ENCODE measurements at regions of chr7 and their contacts with region 1.

Region 1: GRCh38 chr7:129644634-129645230 is 33.2 kb downstream of the NRF1 start:
- DNase-seq: peak; percentile 35
- H3K4me3 ChIP-seq: no peak overlapping the region
- H3K27ac ChIP-seq: no peak overlapping the region
- H3K4me1 ChIP-seq: peaks cover 2% of the 10 kb centered on the region
- H3K27me3 ChIP-seq: no peaks in the 10 kb centered on the region
- CTCF ChIP-seq: peak; percentile 35 to 54

Region 2: DNA sequence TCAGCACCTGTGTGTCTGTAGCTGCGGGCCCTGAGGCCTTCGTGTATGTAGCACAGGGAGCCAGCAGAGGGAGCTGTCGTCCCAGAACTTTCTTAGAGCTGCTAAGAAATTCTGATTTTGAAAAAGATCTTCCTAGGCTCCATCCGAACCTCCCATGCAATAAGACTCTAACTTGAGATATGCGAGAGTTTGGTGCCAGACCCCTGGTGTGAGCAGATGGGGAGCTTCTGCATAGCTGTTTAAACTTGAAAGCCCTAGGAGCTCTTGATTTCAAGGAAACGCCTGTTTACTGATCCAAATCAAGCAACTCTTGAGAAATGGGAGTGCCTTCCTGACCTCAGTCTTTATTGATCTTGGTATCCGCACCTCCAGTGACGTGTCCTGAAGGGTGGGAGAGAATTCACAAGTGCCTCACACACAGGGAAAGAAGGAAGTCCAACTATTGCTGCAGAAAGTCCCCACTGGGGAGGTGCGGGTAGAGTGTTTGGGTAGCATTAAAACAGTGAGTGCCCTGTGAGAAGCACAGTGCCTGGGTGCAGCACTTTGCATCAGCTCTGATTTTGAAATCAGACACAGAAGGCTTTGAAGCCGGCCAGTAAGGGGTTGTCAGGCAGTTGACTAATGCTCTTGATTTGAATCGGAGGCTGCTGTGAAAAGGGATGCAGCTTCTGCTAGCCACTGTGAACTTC is 276.9 kb before region 1 on chr7:
- CTCF ChIA-PET with region 1: no interaction called
- dilution Hi-C with region 1: no loop called
- in situ Hi-C with region 1: loop called (anchors 25 kb)
- intact Hi-C with region 1: loop called (anchors 2 kb)
- DNase-seq: peak; percentile 42
- H3K4me3 ChIP-seq: no peak overlapping the region
- H3K27ac ChIP-seq: no peak overlapping the region
- H3K4me1 ChIP-seq: no peaks in the 10 kb centered on the region
- H3K27me3 ChIP-seq: no peaks in the 10 kb centered on the region
- CTCF ChIP-seq: peak; percentile 82 to 89

Region 3: GRCh38 chr7:129543816-129544215 is 100.9 kb before region 1 on chr7:
- CTCF ChIA-PET with region 1: no interaction called
- dilution Hi-C with region 1: no loop called
- in situ Hi-C with region 1: no loop called
- intact Hi-C with region 1: no loop called
- DNase-seq: no peak
- H3K4me3 ChIP-seq: no peak overlapping the region
- H3K27ac ChIP-seq: no peak overlapping the region
- H3K4me1 ChIP-seq: no peaks in the 10 kb centered on the region
- H3K27me3 ChIP-seq: no peaks in the 10 kb centered on the region
- CTCF ChIP-seq: no peak

Region 4: GRCh38 chr7:129634361-129635034 is 10.2 kb before region 1 on chr7:
- CTCF ChIA-PET with region 1: no interaction called
- dilution Hi-C with region 1: no loop called
- in situ Hi-C with region 1: no loop called
- intact Hi-C with region 1: no loop called
- DNase-seq: no peak
- H3K4me3 ChIP-seq: no peak overlapping the region
- H3K27ac ChIP-seq: no peak overlapping the region
- H3K4me1 ChIP-seq: no peaks in the 10 kb centered on the region
- H3K27me3 ChIP-seq: no peaks in the 10 kb centered on the region
- CTCF ChIP-seq: no peak

Region 5: DNA sequence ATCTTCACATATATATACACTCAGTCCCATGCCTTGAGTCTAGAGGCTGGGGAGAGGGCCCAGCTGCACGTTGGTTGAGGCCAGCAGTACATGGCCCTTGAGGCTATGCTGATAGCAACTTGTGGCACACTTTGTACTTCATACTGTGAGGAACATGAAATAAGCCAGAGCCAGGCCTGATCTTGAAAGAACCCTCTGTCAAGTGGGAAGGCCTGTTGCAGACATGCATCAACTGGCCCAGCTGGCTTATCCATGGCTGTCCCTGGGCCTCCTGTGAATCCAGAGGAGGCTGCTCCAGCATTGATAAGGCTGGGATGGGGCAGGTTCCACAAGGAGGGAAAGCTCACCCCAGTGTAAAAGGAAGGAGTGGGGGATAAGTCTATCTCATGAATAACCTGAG is 107.2 kb after region 1 on chr7:
- CTCF ChIA-PET with region 1: no interaction called
- dilution Hi-C with region 1: no loop called
- in situ Hi-C with region 1: no loop called
- intact Hi-C with region 1: no loop called
- DNase-seq: peak; percentile 13
- H3K4me3 ChIP-seq: no peak overlapping the region
- H3K27ac ChIP-seq: no peak overlapping the region
- H3K4me1 ChIP-seq: peaks cover 15% of the 10 kb centered on the region
- H3K27me3 ChIP-seq: no peaks in the 10 kb centered on the region
- CTCF ChIP-seq: no peak